ENCODE measurements at regions of chr12 and their contacts with region 1.

Region 1: GRCh38 chr12:17866802-17867201 is 223.2 kb downstream of the RERGL start:
- DNase-seq: no peak
- ATAC-seq: no peak
- H3K4me3 ChIP-seq: no peak overlapping the region
- H3K27ac ChIP-seq: no peak overlapping the region
- H3K4me1 ChIP-seq: no peaks in the 10 kb centered on the region
- H3K27me3 ChIP-seq: no peaks in the 10 kb centered on the region
- CTCF ChIP-seq: no peak
- POLR2A ChIP-seq: no peak
- RAD21 ChIP-seq: no peak

Region 2: DNA sequence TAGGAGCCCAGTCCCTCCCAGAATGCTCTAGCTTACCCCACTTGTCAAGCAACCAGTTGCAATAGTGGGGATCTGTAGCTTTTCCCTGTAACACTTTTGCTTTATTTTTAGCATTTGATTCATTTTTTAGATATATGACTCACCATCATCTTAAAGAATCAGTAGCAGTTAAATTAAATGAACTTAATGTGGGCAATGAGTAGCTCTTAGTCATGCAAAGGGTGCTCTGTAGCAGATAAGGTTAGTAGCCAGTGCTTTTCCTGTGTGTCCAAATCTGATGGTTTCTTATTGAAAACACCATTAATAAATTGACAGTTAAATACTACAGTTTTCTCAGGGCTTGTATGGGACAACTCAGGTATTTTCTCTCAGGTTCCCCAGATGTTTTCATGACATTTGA is 88.6 kb before region 1 on chr12:
- CTCF ChIA-PET with region 1: no interaction called
- POLR2A ChIA-PET with region 1: no interaction called
- dilution Hi-C with region 1: no loop called
- in situ Hi-C with region 1: loop called (anchors 5 kb)
- intact Hi-C with region 1: loop called (anchors 2 kb)
- DNase-seq: no peak
- ATAC-seq: no peak
- H3K4me3 ChIP-seq: no peak overlapping the region
- H3K27ac ChIP-seq: no peak overlapping the region
- H3K4me1 ChIP-seq: no peaks in the 10 kb centered on the region
- H3K27me3 ChIP-seq: no peaks in the 10 kb centered on the region
- CTCF ChIP-seq: no peak
- POLR2A ChIP-seq: no peak
- RAD21 ChIP-seq: no peak

Measured in IMR-90 (cell line).